ENCODE measurements at regions of chr7 and their contacts with region 1.

Region 1: GRCh38 chr7:25844102-25844870 is 307.7 kb upstream of the NFE2L3 start:
- DNase-seq: no peak
- H3K4me3 ChIP-seq: no peak overlapping the region
- H3K27ac ChIP-seq: no peak overlapping the region
- H3K4me1 ChIP-seq: peaks cover 15% of the 10 kb centered on the region
- H3K27me3 ChIP-seq: no peaks in the 10 kb centered on the region
- CTCF ChIP-seq: no peak
- EP300 ChIP-seq: no peak
- POLR2A ChIP-seq: no peak

Region 2: GRCh38 chr7:25752967-25753791 is 91.1 kb before region 1 on chr7:
- intact Hi-C with region 1: loop called in 1 of 4 experiments (anchors 5 kb)
- DNase-seq: no peak
- H3K4me3 ChIP-seq: no peak overlapping the region
- H3K27ac ChIP-seq: no peak overlapping the region
- H3K4me1 ChIP-seq: peaks cover 5% of the 10 kb centered on the region
- H3K27me3 ChIP-seq: no peaks in the 10 kb centered on the region
- CTCF ChIP-seq: no peak
- EP300 ChIP-seq: no peak
- POLR2A ChIP-seq: no peak